ENCODE measurements at regions of chr10 and their contacts with region 1.

Region 1: DNA sequence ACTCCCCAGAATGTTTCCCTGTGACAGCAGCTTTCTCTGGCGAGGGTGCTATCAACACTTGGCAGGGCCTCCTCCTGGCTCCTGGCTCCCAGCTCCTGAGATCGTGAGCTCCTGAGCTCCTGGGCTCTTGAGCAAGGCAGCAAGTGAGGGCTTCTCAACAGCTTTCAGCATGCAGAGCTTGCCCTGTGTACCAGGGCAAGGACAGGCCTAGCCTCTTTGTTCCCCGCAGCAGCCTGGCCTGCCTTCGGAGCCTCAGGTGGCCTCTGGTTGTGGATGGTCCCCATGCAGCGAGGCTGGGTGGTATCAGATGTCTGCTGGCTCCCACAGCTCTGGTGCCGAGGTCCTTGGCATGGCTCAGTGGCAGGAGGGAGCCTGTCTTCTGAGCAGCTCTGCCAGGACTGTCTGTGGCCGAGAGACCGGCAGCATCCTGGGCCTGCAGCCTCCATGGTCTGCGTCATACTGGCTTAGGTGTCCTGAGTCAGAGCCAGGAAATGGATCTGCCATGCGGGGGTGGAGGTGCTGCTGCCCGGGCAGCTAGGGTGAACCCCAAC is 44.2 kb downstream of the ZMIZ1 start:
- DNase-seq: peak; percentile 93
- H3K4me3 Mint-ChIP-seq: no peak overlapping the region
- H3K27ac Mint-ChIP-seq: peak overlapping the region; percentile 93
- H3K4me1 Mint-ChIP-seq: peaks cover 56% of the 10 kb centered on the region
- H3K27me3 Mint-ChIP-seq: no peaks in the 10 kb centered on the region
- CTCF ChIP-seq: no peak

Region 2: DNA sequence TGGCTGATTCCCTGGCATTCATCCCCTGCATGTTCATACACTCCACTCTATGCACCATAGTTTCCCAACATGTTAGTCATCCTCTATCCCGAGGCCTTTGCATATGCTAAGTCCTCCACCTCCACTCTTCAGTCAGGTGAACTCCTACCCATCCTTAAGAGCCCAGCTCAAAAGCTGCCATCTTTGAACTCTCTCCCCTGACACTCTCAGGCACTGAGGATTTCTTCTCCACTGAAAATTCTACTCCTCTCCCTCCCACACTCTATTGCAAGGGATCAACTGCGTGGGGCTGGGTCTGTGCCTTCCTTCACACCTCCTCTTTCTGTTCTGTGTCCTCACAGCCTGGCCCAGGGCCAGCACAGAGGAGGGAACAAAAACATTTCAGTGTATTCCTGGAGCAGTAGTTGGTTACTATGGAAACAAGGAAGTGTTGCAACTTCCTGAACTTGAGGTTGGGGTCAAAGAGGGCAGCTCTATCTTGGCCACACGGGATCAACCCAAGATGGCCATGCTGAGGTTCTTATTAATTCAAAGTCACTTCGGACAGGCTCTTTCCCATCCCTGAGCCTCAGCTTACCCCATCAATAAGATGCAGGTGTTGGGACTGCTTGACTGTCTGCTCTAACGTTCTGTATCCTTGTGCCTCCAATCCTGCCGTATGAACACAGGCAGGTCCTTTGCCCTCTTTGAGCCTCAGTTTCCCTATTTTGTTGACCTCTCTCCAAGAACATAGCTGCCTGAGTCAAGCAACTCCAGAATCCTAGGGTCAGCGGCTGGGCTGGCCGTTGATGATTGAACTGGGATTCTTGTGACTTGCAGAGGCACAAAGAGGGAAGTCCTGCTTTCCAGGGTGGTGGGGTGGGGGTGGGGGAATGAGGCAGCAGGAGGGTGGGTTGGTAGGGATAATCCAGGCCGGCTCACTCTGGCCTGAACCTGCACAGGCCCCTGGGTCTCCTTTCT is 28.7 kb before region 1 on chr10:
- CTCF ChIA-PET with region 1: interaction called, 3 read pairs
- POLR2A ChIA-PET with region 1: interaction called, 10 read pairs
- intact Hi-C with region 1: loop called (anchors 2 kb)
- DNase-seq: peak; percentile 98
- H3K4me3 Mint-ChIP-seq: peak overlapping the region; percentile 38
- H3K27ac Mint-ChIP-seq: peak overlapping the region; percentile 97
- H3K4me1 Mint-ChIP-seq: peaks cover 55% of the 10 kb centered on the region
- H3K27me3 Mint-ChIP-seq: no peaks in the 10 kb centered on the region
- CTCF ChIP-seq: no peak

Region 3: DNA sequence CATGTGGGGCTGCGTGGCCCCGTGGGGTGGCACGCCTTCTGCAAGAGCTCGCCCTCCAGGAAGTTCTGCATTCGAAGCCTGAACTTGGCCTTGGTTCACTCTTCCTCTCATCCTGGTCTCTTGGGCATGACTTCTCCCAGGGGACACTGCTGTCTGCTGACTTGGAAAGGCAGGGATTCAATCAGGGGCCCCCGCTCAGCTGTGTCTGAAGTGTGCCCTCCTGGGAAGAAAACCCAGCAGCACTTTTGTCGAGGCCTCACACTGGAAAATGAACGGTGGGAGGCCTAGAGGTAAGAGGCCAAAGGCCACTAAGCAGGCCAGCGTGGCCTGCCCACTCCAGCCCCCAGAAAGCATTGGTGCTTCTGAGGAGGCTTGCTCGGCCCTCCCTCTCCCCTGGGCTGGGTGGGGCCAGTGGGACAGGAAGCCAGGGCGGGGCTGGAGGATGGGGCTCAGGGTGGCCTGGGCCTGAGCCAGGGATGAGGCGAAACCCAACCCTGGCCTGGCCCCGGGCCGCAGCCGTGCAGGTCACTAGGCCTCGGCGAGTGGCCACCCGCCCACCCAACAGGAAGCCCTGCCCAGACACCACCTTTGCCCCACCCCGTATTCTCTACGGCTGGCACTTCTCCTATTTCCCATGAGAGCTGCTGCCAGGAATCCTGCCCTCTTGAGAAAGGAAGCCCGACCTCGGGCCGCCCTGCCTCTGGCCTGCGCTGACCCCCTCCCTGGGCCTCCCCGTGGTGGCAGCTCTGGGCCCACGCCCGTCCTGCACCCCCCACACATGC is 36.9 kb after region 1 on chr10:
- CTCF ChIA-PET with region 1: no interaction called
- POLR2A ChIA-PET with region 1: interaction called, 3 read pairs
- intact Hi-C with region 1: loop called (anchors 5 kb)
- DNase-seq: peak; percentile 97
- H3K4me3 Mint-ChIP-seq: peak overlapping the region; percentile 16
- H3K27ac Mint-ChIP-seq: peak overlapping the region; percentile 77
- H3K4me1 Mint-ChIP-seq: peaks cover 45% of the 10 kb centered on the region
- H3K27me3 Mint-ChIP-seq: no peaks in the 10 kb centered on the region
- CTCF ChIP-seq: no peak

Measured in MCF 10A (cell line).